ENCODE measurements at regions of chr15 and their contacts with region 1.

Region 1: GRCh38 chr15:44265757-44266156 is 22.8 kb upstream of the GOLM2 start:
- DNase-seq: no peak
- H3K4me3 ChIP-seq: no peak overlapping the region
- H3K4me3 Mint-ChIP-seq: no peak overlapping the region
- H3K27ac ChIP-seq: no peak overlapping the region
- H3K27ac Mint-ChIP-seq: no peak overlapping the region
- H3K4me1 ChIP-seq: no peaks in the 10 kb centered on the region
- H3K4me1 Mint-ChIP-seq: no peaks in the 10 kb centered on the region
- H3K27me3 ChIP-seq: no peaks in the 10 kb centered on the region
- H3K27me3 Mint-ChIP-seq: peaks cover 0 to 5% (median 2%) of the 10 kb centered on the region in 3 donors
- CTCF ChIP-seq: no peak

Region 2: DNA sequence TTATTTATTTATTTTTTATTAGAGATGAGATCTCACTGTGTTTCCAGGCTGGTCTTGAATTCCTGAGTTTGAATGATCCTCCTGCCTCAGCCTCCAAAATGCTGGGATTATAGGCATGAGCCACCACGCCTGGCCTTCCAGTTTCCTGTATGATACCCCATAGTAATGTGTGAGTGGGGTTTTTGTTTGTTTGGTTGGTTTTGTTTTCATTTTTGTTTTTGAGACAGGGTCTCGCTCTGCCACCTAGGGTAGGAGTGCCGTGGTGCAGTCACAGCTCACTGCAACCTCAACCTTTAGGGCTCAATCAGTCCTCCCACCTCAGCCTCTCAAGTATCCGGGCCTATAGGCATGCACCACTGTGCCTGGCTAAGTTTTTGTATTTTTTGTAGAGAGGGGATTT is 53.6 kb after region 1 on chr15:
- intact Hi-C with region 1: loop called in 1 of 2 experiments (anchors 5 kb)
- DNase-seq: no peak
- H3K4me3 ChIP-seq: no peak overlapping the region
- H3K4me3 Mint-ChIP-seq: no peak overlapping the region
- H3K27ac ChIP-seq: no peak overlapping the region
- H3K27ac Mint-ChIP-seq: peak overlapping the region in 2 of 7 donors; percentile 0 to 18
- H3K4me1 ChIP-seq: no peaks in the 10 kb centered on the region
- H3K4me1 Mint-ChIP-seq: peaks cover 14% of the 10 kb centered on the region
- H3K27me3 ChIP-seq: no peaks in the 10 kb centered on the region
- H3K27me3 Mint-ChIP-seq: peaks cover 0 to 4% (median 0%) of the 10 kb centered on the region in 3 donors
- CTCF ChIP-seq: no peak

Region 3: GRCh38 chr15:44545913-44546802 is 280.4 kb after region 1 on chr15:
- intact Hi-C with region 1: no loop called
- DNase-seq: peak; percentile 58 to 71 (median 63)
- H3K4me3 ChIP-seq: no peak overlapping the region
- H3K4me3 Mint-ChIP-seq: no peak overlapping the region
- H3K27ac ChIP-seq: peak overlapping the region in 1 of 2 donors; percentile 66
- H3K27ac Mint-ChIP-seq: peak overlapping the region; percentile 62 to 84 (median 73)
- H3K4me1 ChIP-seq: peaks cover 0 to 15% of the 10 kb centered on the region in 2 donors
- H3K4me1 Mint-ChIP-seq: peaks cover 28% of the 10 kb centered on the region
- H3K27me3 ChIP-seq: no peaks in the 10 kb centered on the region
- H3K27me3 Mint-ChIP-seq: peaks cover 0 to 3% (median 0%) of the 10 kb centered on the region in 3 donors
- CTCF ChIP-seq: peak; percentile 38